Dendritic cell treated with granulocyte-macrophage colony-stimulating factor and Interleukin-4, amounts not matched to agents 40 ng/mL and 50 ng/mL, for 4 days (primary cell): ENCODE measurements at regions of chr17 and their contacts with region 1.

Region 1: DNA sequence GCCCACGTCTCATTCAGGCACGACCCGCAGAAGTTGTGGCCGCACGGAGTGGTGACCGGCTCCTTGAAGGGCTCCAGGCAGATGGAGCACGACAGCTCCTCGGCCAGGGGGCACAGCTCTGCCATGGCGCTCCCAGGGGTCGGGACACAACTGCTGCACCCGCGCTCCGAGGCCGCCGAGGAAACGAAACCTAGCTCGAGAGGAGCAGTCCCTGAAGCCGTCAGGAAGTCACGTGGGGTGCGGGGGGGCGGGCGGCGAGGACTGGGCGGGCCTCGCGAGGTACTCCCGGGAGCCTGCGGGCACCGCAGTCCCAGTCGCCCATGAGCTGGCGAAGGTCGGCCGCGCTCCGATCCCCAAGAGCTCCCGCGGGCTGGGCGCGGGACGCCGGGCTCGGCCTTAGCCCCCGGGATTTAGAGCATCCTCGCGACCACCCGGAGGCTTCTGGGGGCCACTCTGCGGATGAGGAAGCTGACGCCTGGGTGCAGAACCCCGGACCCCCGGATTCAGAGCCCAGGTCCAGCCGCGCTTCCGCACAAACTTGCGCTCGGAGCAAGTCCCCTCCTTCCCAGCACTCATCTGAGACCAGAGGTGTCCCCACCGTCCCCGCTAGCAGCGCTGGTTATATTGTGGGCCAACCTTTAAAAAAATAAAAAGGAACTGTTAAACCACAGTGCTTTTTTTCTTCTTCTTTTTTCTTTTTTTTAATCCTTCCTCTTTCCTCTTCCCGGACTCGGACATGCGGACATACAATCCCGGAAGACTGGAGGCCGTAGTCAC is at the start of gene TRIM25:
- H3K4me3 Mint-ChIP-seq: peak within 1 kb of the TSS; percentile 95
- H3K27ac Mint-ChIP-seq: peak within 1 kb of the TSS; percentile 91
- H3K4me1 Mint-ChIP-seq: peaks cover 56% of the 10 kb centered on the region
- H3K27me3 Mint-ChIP-seq: no peaks in the 10 kb centered on the region

Region 2: DNA sequence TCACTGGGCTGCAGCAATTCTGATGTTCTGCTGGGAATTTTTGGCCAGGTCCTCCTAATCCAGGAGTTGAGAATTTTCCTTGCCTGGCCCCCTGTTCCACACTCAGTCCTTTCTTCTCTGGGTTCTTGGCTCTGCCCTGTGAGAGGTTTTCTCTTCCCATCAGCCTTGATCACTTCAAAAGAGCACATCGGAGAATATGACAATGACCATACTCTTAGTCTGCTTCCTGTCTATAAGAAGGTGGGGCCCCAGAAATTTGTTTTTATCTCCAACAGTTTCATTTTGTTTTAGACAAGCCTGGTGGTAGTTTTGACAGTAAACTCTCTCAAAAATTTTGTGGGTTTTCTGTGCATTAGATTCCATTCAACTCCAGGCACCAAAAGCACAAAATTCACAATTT is 151.1 kb before region 1 on chr17:
- intact Hi-C with region 1: no loop called
- H3K4me3 Mint-ChIP-seq: no peak overlapping the region
- H3K27ac Mint-ChIP-seq: no peak overlapping the region
- H3K4me1 Mint-ChIP-seq: peaks cover 5% of the 10 kb centered on the region
- H3K27me3 Mint-ChIP-seq: no peaks in the 10 kb centered on the region

Region 3: DNA sequence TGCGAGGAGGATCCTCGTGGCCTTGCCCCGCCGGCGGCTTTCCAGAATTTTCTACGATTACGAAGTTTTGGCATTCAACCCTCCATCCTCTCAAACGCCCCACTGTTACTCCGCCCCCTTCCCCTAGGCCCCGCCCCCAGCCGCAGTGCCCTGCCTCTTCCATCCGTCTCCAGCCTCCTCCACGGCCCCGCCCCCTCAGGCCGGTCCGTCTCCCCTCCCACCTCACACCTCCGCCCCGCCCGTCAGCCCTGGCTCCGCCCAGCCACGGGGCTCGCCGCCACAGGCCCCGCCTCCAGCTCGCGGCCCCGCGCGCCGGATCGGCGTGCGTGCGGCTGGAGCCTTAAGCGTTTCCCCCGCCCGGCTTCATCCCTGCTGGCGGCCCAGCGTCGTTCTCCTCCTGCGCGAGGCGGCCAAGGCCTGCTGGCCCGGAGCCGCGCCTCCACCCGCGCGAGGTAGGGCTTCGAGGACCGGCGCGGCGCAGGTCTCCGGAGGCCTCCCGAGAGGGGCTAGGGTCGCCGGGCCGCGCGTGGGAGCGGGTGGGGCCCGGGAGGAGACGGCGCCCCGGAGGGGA is 80.2 kb before region 1 on chr17 and contains the starts of genes C17orf67 and DGKE:
- intact Hi-C with region 1: loop called (anchors 5 kb)
- H3K4me3 Mint-ChIP-seq: peak within 1 kb of the TSS; percentile 90
- H3K27ac Mint-ChIP-seq: peak within 1 kb of the TSS; percentile 74
- H3K4me1 Mint-ChIP-seq: peaks cover 48% of the 10 kb centered on the region
- H3K27me3 Mint-ChIP-seq: peaks cover 10% of the 10 kb centered on the region

Region 4: GRCh38 chr17:56891784-56892183 is 22.3 kb before region 1 on chr17:
- intact Hi-C with region 1: no loop called
- H3K4me3 Mint-ChIP-seq: no peak overlapping the region
- H3K27ac Mint-ChIP-seq: no peak overlapping the region
- H3K4me1 Mint-ChIP-seq: peaks cover 16% of the 10 kb centered on the region
- H3K27me3 Mint-ChIP-seq: no peaks in the 10 kb centered on the region

Region 5: DNA sequence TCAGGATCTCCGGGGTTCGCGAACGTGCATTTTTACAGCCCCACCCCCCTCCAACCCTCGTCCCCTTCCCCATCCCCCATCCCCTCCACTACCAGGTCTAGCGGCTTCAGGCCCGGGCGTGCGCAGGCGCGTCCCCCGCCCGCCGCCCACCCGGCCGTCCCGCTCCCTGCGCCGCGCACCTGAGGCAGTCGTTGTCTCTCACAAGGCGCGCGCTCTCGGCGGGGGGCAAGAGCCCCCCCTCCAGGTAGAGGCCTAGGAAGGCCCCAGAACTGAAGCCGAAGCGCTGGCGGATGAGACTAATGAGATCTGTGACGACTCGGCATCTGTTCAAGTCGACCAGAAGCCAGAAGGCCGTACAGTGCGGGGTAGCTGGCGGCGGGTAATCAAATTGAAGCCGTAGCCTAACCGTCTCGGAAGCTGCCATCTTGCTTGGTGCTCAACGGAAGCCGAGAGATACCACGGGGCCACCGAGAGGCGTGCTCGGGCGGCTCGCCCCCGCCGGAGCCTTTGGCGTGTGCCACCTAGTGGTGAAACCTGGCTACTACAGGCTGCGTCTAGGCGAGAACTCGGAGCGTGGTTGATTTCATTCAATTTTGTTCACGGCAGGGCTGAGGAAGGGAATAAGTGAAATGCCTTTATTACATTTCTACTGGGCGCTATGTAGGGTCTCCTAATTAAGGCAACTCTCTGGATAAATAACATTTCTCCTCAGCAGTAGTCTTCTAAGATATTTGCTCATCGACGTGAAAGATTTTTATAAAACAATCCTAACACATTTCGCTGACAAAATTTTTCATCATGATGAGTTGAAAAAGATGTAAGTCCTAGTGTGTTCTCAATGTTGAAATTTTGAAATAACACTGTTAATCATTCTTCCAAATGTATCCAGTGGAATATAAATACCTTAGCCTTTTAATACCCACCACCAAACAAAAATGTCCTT is 46.8 kb after region 1 on chr17 and contains the start of gene COIL:
- intact Hi-C with region 1: no loop called
- H3K4me3 Mint-ChIP-seq: peak within 1 kb of the TSS; percentile 73
- H3K27ac Mint-ChIP-seq: peak within 1 kb of the TSS; percentile 71
- H3K4me1 Mint-ChIP-seq: peaks cover 20% of the 10 kb centered on the region
- H3K27me3 Mint-ChIP-seq: no peaks in the 10 kb centered on the region